Pancreas (tissue), 10 donors: ENCODE measurements at regions of chr11 and their contacts with region 1.

Region 1: DNA sequence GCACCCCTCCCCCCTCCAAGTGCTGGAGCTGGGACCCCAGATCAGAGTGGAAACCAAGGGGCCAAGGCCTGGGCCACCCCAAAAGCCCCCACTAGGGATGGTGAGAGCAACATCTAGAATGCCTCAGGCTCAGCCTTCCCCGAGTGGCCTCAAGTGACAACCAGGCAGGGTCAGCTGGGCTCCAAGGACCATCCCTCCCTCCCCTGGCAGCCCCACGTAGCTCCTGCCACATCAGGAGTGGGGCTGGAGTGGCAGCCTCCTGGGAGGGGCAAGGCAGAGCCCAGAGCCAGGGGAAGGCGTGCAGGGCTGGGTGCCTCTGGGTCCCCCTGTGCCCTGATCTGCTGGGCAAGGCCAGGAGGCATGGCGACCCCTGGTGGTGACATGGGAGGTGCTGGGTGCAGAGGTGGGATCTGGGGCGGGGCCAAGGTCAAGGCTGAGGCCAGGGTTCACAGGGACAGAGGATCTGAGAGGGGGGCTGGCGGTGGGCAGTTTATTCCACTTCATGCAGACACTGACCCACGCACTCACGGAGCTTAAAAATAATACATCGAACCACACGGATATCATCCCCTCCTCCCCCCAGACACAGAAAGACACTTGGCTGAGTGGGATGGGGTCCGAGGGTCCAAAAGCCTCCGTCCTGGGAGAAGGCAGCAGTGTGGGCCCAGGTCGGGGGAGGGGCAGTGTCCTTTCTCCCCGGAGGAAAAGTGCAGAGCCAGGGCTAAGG is 15.8 kb upstream of the EHD1 start:
- DNase-seq: peak; percentile 72 to 94 (median 86)
- ATAC-seq: peak; percentile 66 to 82 (median 72)
- H3K4me3 ChIP-seq: no peak overlapping the region
- H3K27ac ChIP-seq: peak overlapping the region; percentile 59 to 87 (median 76)
- H3K4me1 ChIP-seq: peaks cover 9 to 25% (median 10%) of the 10 kb centered on the region in 3 donors
- H3K27me3 ChIP-seq: no peaks in the 10 kb centered on the region
- CTCF ChIP-seq: peak; percentile 58 to 78 (median 70)

Region 2: GRCh38 chr11:64675450-64676260 is 218.6 kb before region 1 on chr11:
- intact Hi-C with region 1: no loop called
- DNase-seq: no peak
- ATAC-seq: peak in 3 of 4 donors; percentile 78 to 86 (median 81)
- H3K4me3 ChIP-seq: no peak overlapping the region
- H3K27ac ChIP-seq: no peak overlapping the region
- H3K4me1 ChIP-seq: no peaks in the 10 kb centered on the region
- H3K27me3 ChIP-seq: no peaks in the 10 kb centered on the region
- CTCF ChIP-seq: no peak

Region 3: DNA sequence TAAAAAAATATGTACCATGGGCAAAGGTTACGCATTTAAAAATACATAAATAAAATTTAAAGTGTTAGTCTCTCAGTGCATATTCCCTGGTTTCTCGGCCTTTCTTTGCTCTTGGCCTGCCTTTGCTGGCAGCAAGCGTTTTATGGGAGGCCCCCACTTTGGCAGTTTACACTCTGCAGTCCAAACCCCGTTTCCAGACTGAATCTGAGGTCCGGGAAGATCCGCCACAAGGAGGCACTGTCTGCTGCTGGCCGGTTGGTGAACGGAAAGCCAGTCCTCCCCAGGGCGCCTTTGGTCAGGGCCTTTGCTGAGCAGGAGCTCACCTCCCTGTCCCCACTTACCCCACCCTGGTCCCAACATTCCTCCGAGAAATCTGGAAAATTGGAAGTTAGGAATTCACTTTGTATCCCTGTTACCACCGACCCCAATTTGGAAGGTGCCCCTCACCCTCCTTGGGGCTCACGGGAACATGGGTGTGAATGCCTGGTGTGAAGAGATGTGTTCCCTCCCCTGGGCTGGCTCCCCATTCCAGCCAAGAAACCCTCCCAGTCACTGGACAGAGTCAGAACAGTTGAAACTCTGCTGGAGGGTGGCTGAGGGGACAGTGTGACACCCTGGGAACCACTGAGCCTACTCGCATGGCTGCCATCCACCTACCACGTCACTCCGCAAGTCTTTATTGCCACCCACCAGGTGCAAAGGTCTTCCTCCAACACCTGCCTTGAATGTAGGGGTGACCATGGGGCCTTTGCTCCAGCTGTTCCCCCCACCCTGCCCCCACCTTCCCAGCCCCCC is 106.5 kb before region 1 on chr11:
- intact Hi-C with region 1: loop called in 2 of 3 experiments (anchors 10 kb)
- DNase-seq: peak; percentile 58 to 81 (median 67)
- ATAC-seq: peak; percentile 74 to 93 (median 86)
- H3K4me3 ChIP-seq: no peak overlapping the region
- H3K27ac ChIP-seq: no peak overlapping the region
- H3K4me1 ChIP-seq: no peaks in the 10 kb centered on the region
- H3K27me3 ChIP-seq: no peaks in the 10 kb centered on the region
- CTCF ChIP-seq: peak; percentile 41 to 63 (median 50)

Region 4: DNA sequence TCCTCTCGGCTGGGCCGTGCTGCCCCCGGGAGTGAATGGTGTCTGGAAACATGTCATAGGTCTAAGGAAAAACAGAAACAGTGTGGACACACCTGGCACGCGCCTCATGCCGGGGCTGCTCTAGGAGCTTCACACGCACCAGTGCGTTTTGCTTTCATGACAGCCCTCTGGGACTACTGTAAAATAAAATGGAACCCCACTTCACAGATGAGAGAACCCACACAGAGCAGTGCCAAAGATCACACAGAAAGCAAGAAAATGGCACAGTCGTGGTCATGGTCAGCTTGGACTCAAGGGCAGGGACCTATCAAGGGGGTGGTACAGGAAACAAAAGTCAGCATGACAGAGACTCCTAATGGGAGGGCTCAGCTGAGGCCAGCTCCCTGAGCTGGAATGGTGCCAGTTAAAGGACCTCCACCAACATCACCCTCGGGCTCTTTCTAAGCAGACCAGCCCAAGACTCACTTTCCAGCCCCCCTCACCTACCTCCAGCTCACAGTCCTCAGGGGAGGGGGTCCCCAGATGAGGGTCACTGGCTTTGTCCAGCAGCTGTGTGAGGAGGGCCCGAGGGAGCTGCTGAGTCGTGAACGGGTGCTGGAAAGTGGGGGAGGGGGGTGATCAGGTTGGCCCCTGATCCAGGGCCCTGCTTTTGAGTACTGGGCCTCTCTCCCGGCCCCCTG is 94.5 kb before region 1 on chr11:
- intact Hi-C with region 1: loop called in 1 of 3 experiments (anchors 10 kb)
- DNase-seq: peak in 2 of 6 donors; percentile 11 to 54
- ATAC-seq: no peak
- H3K4me3 ChIP-seq: no peak overlapping the region
- H3K27ac ChIP-seq: no peak overlapping the region
- H3K4me1 ChIP-seq: peaks cover 6 to 12% (median 7%) of the 10 kb centered on the region in 3 donors
- H3K27me3 ChIP-seq: no peaks in the 10 kb centered on the region
- CTCF ChIP-seq: no peak

Region 5: GRCh38 chr11:64846998-64847666 is 47.1 kb before region 1 on chr11:
- intact Hi-C with region 1: loop called in 2 of 3 experiments (anchors 5 kb)
- DNase-seq: peak; percentile 89 to 100 (median 95)
- ATAC-seq: peak; percentile 39 to 73 (median 64)
- H3K4me3 ChIP-seq: no peak overlapping the region
- H3K27ac ChIP-seq: no peak overlapping the region
- H3K4me1 ChIP-seq: peaks cover 12 to 17% (median 14%) of the 10 kb centered on the region in 3 donors
- H3K27me3 ChIP-seq: no peaks in the 10 kb centered on the region
- CTCF ChIP-seq: peak; percentile 95 to 99 (median 98)

Region 6: GRCh38 chr11:64854534-64855429 is 39.5 kb before region 1 on chr11:
- intact Hi-C with region 1: loop called in 2 of 3 experiments (anchors 5 kb)
- DNase-seq: peak in 5 of 6 donors; percentile 52 to 76 (median 70)
- ATAC-seq: peak; percentile 81 to 88 (median 84)
- H3K4me3 ChIP-seq: no peak overlapping the region
- H3K27ac ChIP-seq: peak overlapping the region; percentile 33 to 62 (median 46)
- H3K4me1 ChIP-seq: peaks cover 0 to 18% (median 0%) of the 10 kb centered on the region in 3 donors
- H3K27me3 ChIP-seq: no peaks in the 10 kb centered on the region
- CTCF ChIP-seq: no peak

Region 7: DNA sequence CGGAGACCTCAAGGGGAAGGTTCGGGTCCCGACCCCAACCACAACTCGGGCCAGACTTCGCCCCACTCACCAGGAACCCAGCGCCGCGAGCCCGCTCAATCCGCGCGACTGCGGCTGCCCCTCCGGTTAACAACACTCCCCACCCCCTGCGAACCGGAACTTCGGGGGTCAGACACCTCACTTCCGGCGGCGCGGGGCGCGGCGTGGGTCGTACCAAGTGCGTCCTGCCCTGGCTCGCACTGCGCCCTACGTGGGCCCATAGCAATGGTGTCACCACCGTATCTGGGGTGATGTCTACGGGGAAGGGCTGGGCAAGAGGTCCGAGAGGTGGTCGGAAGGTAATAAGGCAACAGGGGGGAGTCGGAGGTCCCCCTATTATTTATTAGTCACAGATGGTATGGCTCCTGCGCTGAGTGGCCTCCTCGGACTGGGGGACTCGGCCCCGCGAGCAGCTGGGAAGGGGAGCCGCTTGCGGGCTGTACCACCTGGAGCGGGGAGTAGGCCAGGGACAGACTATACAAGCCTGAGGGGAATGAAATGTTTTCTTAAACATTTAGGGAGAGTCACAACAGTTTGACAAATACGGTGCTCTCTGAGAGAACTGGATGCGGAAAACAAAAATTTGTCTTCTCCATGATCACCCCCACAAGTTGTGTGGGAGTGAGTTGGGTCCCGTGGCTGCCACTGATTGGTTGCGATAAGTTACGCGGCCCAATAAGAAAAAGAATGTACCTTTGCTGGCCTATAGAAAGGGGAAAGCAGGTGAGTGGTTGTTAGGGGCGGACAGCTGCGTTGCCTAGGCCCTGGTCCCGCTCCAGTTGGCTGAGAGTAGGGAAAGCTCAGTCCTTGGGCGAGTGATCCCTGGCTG is 240.4 kb after region 1 on chr11 and contains the start of gene SYVN1:
- intact Hi-C with region 1: no loop called
- DNase-seq: peak; percentile 96 to 99 (median 99)
- ATAC-seq: peak; percentile 82 to 92 (median 84)
- H3K4me3 ChIP-seq: peak within 1 kb of the TSS; percentile 70 to 93 (median 82)
- H3K27ac ChIP-seq: peak within 1 kb of the TSS; percentile 99 to 100 (median 99)
- H3K4me1 ChIP-seq: peaks cover 14 to 32% (median 26%) of the 10 kb centered on the region in 3 donors
- H3K27me3 ChIP-seq: no peaks in the 10 kb centered on the region
- CTCF ChIP-seq: no peak
- total RNA-seq, gene SYVN1: 47.5 to 98.2 (median 66.3) TPM

Region 8: GRCh38 chr11:65440831-65441499 is 546.7 kb after region 1 on chr11:
- intact Hi-C with region 1: no loop called
- DNase-seq: peak in 1 of 6 donors; percentile 21
- ATAC-seq: peak in 1 of 4 donors; percentile 3
- H3K4me3 ChIP-seq: no peak overlapping the region
- H3K27ac ChIP-seq: peak overlapping the region in 1 of 4 donors; percentile 39
- H3K4me1 ChIP-seq: peaks cover 12 to 33% (median 23%) of the 10 kb centered on the region in 3 donors
- H3K27me3 ChIP-seq: no peaks in the 10 kb centered on the region
- CTCF ChIP-seq: no peak